ENCODE measurements at regions of chr7 and their contacts with region 1.

Region 1: DNA sequence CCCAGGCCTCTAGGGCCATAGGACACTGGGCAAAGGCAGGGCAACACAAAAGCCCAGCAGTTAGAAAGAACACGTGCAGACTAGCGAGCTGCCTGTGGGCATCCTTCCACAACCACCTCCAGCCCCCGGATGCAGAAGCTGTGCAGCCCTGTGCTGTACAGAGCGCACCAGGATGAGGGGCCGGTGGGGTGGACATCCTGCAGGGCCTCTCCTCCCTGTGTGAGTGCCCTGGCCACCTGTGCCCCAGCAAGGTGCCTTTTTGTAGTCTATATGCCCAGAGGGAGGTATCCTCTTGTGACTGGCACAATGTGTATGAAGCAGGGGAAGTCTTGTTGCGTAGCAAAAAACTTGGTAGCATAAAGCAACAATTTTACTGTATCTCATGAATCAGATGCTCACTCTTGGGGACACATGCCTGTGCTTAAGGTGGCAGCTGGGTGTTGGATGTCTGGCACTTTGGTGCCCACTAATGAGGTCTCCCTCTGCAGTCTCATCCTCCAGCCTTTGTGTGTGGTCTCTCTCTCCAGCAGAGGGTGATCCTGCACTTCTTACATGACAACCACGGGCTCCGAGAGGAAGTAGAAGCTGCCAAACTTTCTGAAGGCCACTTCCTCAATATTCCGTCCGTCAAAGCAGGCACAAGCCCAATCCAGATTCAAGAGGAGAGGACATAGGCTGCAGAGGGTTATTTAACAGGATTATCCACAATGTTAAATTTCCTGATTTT is 8.7 kb downstream of the NCAPG2 start:
- DNase-seq: peak; percentile 28
- ATAC-seq: peak; percentile 52
- H3K4me3 Mint-ChIP-seq: no peak overlapping the region
- H3K27ac Mint-ChIP-seq: no peak overlapping the region
- H3K4me1 Mint-ChIP-seq: peaks cover 32% of the 10 kb centered on the region
- H3K27me3 Mint-ChIP-seq: no peaks in the 10 kb centered on the region

Region 2: GRCh38 chr7:158631574-158632194 is 64.2 kb before region 1 on chr7:
- CTCF ChIA-PET with region 1: no interaction called
- POLR2A ChIA-PET with region 1: no interaction called
- intact Hi-C with region 1: no loop called
- DNase-seq: no peak
- ATAC-seq: no peak
- H3K4me3 Mint-ChIP-seq: no peak overlapping the region
- H3K27ac Mint-ChIP-seq: no peak overlapping the region
- H3K4me1 Mint-ChIP-seq: no peaks in the 10 kb centered on the region
- H3K27me3 Mint-ChIP-seq: no peaks in the 10 kb centered on the region

Region 3: GRCh38 chr7:158680754-158681153 is 15.1 kb before region 1 on chr7:
- CTCF ChIA-PET with region 1: interaction called, 10 read pairs
- POLR2A ChIA-PET with region 1: no interaction called
- intact Hi-C with region 1: no loop called
- DNase-seq: no peak
- ATAC-seq: no peak
- H3K4me3 Mint-ChIP-seq: no peak overlapping the region
- H3K27ac Mint-ChIP-seq: no peak overlapping the region
- H3K4me1 Mint-ChIP-seq: peaks cover 5% of the 10 kb centered on the region
- H3K27me3 Mint-ChIP-seq: no peaks in the 10 kb centered on the region